ENCODE measurements at regions of chr14 and their contacts with region 1.

Region 1: GRCh38 chr14:103356024-103356682 is 22.1 kb downstream of the EIF5 start:
- DNase-seq: no peak
- H3K4me3 ChIP-seq: peak overlapping the region in 1 of 3 donors; percentile 2
- H3K27ac ChIP-seq: no peak overlapping the region
- H3K4me1 ChIP-seq: no peaks in the 10 kb centered on the region
- H3K27me3 ChIP-seq: no peaks in the 10 kb centered on the region
- CTCF ChIP-seq: no peak
- POLR2A ChIP-seq: no peak

Region 2: DNA sequence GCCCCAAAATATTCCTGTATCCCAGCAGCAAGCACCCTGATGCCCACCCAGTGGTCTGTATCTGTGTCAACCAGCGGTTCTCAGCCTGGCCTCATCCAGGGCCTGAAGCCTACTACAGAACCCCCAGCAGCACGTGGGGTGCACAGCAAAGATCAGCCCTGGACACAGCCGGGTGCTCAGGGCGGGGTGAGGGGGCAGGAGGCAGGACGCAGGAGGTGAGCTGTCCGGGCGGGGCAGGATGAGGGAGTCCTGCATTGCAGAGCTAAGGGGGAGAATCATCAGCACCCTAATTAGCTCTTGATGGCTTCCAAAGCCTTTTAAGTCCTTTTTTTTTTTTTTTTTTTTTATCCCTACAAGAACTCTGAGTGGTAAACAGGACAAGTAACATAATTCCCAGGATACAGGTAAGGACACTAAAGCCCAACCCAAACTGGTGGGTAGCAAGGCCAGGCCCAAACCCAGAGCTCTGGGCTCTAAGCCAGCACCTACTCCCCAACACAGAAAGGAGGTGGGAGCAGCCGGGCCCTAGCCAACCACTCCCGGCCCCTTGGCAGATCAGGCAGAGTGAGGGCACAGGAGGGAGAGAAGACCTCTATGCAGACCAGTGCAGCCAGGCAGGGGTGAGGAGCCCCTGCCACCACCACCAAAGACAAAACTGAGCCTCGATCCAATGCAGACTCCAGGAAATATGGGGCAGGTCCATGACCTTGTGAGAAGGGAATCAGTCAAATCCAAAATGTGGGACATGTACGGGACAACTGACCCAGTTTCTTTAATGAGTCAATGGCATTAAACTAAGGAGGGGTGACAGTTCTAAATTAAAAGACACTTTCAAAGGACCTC is 54.4 kb before region 1 on chr14:
- intact Hi-C with region 1: loop called (anchors 2 kb)
- DNase-seq: no peak
- H3K4me3 ChIP-seq: no peak overlapping the region
- H3K27ac ChIP-seq: no peak overlapping the region
- H3K4me1 ChIP-seq: no peaks in the 10 kb centered on the region
- H3K27me3 ChIP-seq: no peaks in the 10 kb centered on the region
- CTCF ChIP-seq: no peak
- POLR2A ChIP-seq: no peak

Region 3: GRCh38 chr14:103326078-103326477 is 30.1 kb before region 1 on chr14:
- intact Hi-C with region 1: loop called (anchors 1 kb)
- DNase-seq: no peak
- H3K4me3 ChIP-seq: no peak overlapping the region
- H3K27ac ChIP-seq: no peak overlapping the region
- H3K4me1 ChIP-seq: no peaks in the 10 kb centered on the region
- H3K27me3 ChIP-seq: peaks cover 0 to 2% of the 10 kb centered on the region in 2 donors
- CTCF ChIP-seq: no peak
- POLR2A ChIP-seq: no peak